ENCODE measurements at regions of chr6 and their contacts with region 1.

Region 1: GRCh38 chr6:25962149-25963127 is at the start of gene TRIM38:
- DNase-seq: peak; percentile 22 to 90 (median 85)
- ATAC-seq: peak; percentile 95
- H3K4me3 ChIP-seq: peak within 1 kb of the TSS; percentile 73
- H3K4me3 Mint-ChIP-seq: peak within 1 kb of the TSS; percentile 92 to 100 (median 97)
- H3K27ac ChIP-seq: peak within 1 kb of the TSS; percentile 97
- H3K27ac Mint-ChIP-seq: peak within 1 kb of the TSS; percentile 97 to 100 (median 98)
- H3K4me1 ChIP-seq: peaks cover 61 to 75% of the 10 kb centered on the region in 2 donors
- H3K4me1 Mint-ChIP-seq: peaks cover 61 to 89% (median 84%) of the 10 kb centered on the region in 7 donors
- H3K27me3 ChIP-seq: no peaks in the 10 kb centered on the region
- H3K27me3 Mint-ChIP-seq: no peaks in the 10 kb centered on the region
- total RNA-seq, gene TRIM38: 17.4 to 32.8 (median 29.9) TPM

Region 2: DNA sequence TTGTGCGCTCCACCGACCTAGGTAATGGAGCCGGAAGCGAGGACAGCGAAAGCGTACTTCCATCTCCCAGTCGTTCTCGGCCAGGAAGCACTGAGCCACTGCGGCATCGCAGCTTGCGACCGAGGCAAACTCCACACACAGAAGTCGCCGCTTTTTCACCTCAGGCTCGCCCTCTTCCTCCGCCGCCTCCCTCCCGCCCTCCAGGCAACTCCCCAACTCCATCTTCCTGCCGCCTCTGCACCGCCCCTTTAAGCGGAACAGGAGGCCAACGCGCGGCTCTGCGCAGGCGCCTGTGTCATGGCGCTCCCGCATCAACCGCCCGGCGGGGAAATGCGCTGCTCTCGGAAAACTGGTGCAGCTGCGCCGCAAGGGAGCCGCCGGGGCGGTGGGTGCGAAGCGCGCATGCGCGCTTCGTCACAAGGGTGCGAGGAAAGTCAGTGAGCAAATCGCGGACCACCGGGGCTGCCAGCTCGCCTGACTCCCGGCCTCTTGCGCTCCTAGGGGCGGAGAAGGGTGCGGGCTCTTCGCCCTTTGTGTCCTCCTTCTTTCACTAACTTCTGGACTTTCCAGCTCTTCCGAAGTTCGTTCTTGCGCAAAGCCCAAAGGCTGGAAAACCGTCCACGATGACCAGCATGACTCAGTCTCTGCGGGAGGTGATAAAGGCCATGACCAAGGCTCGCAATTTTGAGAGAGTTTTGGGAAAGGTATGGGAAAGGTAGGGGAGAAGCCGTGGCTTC is 1295.6 kb before region 1 on chr6 and contains the starts of genes ACOT13 and TDP2:
- CTCF ChIA-PET with region 1: no interaction called
- POLR2A ChIA-PET with region 1: no interaction called
- intact Hi-C with region 1: loop called in 1 of 2 experiments (anchors 5 kb)
- DNase-seq: peak; percentile 93 to 97 (median 96)
- ATAC-seq: peak; percentile 97
- H3K4me3 ChIP-seq: peak within 1 kb of the TSS; percentile 91
- H3K4me3 Mint-ChIP-seq: peak within 1 kb of the TSS; percentile 93 to 100 (median 98)
- H3K27ac ChIP-seq: peak within 1 kb of the TSS; percentile 88
- H3K27ac Mint-ChIP-seq: peak within 1 kb of the TSS; percentile 91 to 99 (median 98)
- H3K4me1 ChIP-seq: peaks cover 19 to 27% of the 10 kb centered on the region in 2 donors
- H3K4me1 Mint-ChIP-seq: peaks cover 28 to 70% (median 68%) of the 10 kb centered on the region in 7 donors
- H3K27me3 ChIP-seq: no peaks in the 10 kb centered on the region
- H3K27me3 Mint-ChIP-seq: no peaks in the 10 kb centered on the region
- total RNA-seq, gene ACOT13: 4.0 to 20.0 (median 12.5) TPM
- total RNA-seq, gene TDP2: 38.6 to 69.7 (median 48.2) TPM

Region 3: GRCh38 chr6:25278914-25279747 is 683.3 kb before region 1 on chr6 and contains the start of gene CARMIL1:
- CTCF ChIA-PET with region 1: no interaction called
- POLR2A ChIA-PET with region 1: no interaction called
- intact Hi-C with region 1: loop called in 1 of 2 experiments (anchors 5 kb)
- DNase-seq: peak; percentile 46 to 76 (median 70)
- ATAC-seq: peak; percentile 84
- H3K4me3 ChIP-seq: peak within 1 kb of the TSS; percentile 64
- H3K4me3 Mint-ChIP-seq: peak within 1 kb of the TSS; percentile 88 to 98 (median 94)
- H3K27ac ChIP-seq: peak within 1 kb of the TSS; percentile 77
- H3K27ac Mint-ChIP-seq: peak within 1 kb of the TSS; percentile 74 to 94 (median 90)
- H3K4me1 ChIP-seq: peaks cover 14 to 15% of the 10 kb centered on the region in 2 donors
- H3K4me1 Mint-ChIP-seq: peaks cover 19 to 62% (median 41%) of the 10 kb centered on the region in 7 donors
- H3K27me3 ChIP-seq: no peaks in the 10 kb centered on the region
- H3K27me3 Mint-ChIP-seq: peaks cover 0 to 16% (median 6%) of the 10 kb centered on the region in 5 donors
- total RNA-seq, gene CARMIL1: 3.3 to 12.8 (median 10.4) TPM

Region 4: DNA sequence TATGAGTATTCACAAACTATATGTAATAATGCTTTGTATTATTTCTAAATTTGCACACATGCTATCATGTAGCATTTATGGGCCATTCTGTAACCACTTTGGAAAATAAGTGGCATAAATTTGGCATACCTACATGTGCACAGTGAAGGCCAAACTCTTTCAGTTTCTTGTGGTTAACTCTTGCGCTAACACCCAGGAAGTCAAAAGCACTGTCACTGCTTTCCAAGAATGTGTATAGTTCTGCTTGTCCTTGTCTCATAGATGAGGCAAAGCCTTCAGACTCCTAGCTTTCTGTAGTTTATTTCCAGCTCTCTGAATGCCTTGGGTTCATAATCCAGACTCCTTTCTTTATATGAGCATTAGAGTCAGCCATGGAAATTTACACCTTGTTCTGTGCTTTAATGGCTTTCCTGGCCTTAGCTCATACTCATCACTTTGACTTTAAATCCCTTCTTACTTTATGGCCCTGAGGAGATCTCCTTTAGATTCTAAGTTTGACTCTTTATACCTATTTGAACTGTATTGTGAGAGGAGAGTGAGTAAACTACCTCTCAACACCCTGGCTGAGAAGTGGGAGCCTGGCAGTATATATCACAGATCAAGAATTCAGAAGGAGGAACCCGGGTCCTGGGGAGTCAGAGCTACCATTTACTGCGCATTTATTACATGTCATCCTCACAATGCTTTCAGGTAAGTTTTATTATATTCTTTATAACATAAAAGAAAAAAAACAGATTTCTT is 87.4 kb before region 1 on chr6:
- CTCF ChIA-PET with region 1: no interaction called
- POLR2A ChIA-PET with region 1: no interaction called
- intact Hi-C with region 1: loop called in 1 of 2 experiments (anchors 5 kb)
- DNase-seq: no peak
- ATAC-seq: no peak
- H3K4me3 ChIP-seq: no peak overlapping the region
- H3K4me3 Mint-ChIP-seq: peak overlapping the region in 1 of 10 donors; percentile 69
- H3K27ac ChIP-seq: no peak overlapping the region
- H3K27ac Mint-ChIP-seq: peak overlapping the region in 1 of 9 donors; percentile 83
- H3K4me1 ChIP-seq: peaks cover 4 to 15% of the 10 kb centered on the region in 2 donors
- H3K4me1 Mint-ChIP-seq: peaks cover 13 to 46% (median 20%) of the 10 kb centered on the region in 7 donors
- H3K27me3 ChIP-seq: no peaks in the 10 kb centered on the region
- H3K27me3 Mint-ChIP-seq: peaks cover 0 to 10% (median 0%) of the 10 kb centered on the region in 5 donors

Region 5: DNA sequence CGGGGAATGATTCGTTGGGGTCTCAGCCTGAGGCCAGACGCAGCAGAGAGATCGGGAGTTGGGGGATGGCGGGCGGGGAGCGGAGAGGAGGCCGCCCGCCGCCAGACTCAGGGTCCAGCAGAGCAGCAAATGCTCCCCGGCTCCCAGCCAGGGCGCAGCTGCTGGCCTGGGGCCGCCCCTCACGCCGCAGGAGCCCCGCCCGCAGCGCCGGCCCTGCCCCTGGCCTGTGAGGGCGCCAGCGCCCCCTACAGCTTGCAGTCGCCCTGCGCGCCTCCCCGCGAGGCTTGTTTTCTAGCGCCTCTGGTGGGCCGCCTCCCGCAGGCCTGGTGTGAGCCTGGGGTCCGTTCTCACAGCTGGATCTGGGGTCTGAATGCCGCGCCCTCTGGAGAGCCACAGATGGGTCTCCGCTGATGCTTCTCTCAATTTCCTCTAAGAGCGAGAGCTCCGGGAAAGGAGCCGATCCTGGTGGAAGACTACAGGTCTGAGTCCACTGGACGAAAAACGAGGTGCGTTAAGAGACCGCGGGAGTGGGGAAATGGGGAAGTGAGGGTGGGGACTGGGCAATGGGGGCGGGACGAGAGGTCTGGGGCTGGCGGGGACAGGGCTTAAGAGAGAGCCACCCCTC is 30.1 kb after region 1 on chr6:
- CTCF ChIA-PET with region 1: interaction called, 20 read pairs
- POLR2A ChIA-PET with region 1: interaction called, 13 read pairs
- intact Hi-C with region 1: loop called (anchors 1 kb)
- DNase-seq: peak; percentile 83 to 98 (median 91)
- ATAC-seq: peak; percentile 99
- H3K4me3 ChIP-seq: peak overlapping the region; percentile 79
- H3K4me3 Mint-ChIP-seq: peak overlapping the region; percentile 91 to 98 (median 94)
- H3K27ac ChIP-seq: peak overlapping the region; percentile 73
- H3K27ac Mint-ChIP-seq: peak overlapping the region; percentile 86 to 98 (median 95)
- H3K4me1 ChIP-seq: no peaks in the 10 kb centered on the region
- H3K4me1 Mint-ChIP-seq: peaks cover 0 to 40% (median 24%) of the 10 kb centered on the region in 7 donors
- H3K27me3 ChIP-seq: no peaks in the 10 kb centered on the region
- H3K27me3 Mint-ChIP-seq: no peaks in the 10 kb centered on the region

Region 6: DNA sequence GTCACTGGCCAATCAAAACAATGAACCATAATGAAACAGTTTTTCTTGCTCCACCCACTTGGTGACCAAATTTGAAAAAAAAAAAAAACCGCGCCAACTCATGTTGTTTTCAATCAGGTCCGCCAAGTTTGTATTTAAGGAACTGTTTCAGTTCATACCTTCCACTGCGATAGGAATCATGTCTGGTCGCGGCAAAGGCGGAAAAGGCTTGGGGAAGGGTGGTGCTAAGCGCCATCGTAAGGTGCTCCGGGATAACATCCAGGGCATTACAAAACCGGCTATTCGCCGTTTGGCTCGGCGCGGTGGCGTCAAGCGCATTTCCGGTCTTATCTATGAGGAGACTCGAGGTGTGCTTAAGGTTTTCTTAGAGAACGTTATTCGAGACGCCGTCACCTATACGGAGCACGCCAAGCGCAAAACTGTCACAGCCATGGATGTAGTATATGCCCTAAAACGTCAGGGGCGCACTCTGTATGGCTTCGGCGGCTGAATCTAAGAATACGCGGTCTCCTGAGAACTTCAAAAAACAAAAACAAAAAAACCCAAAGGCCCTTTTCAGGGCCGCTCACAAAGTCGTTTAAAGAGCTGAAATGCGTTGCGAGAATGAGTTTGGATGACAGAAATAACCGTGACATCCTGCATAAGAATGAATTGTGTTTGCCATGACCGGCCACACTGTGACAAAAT is 141.5 kb after region 1 on chr6:
- CTCF ChIA-PET with region 1: no interaction called
- POLR2A ChIA-PET with region 1: interaction called, 5 read pairs
- intact Hi-C with region 1: loop called in 1 of 2 experiments (anchors 1 kb)
- DNase-seq: peak; percentile 83 to 96 (median 95)
- ATAC-seq: peak; percentile 94
- H3K4me3 ChIP-seq: peak overlapping the region; percentile 40
- H3K4me3 Mint-ChIP-seq: peak overlapping the region; percentile 81 to 97 (median 89)
- H3K27ac ChIP-seq: peak overlapping the region; percentile 75
- H3K27ac Mint-ChIP-seq: peak overlapping the region; percentile 96 to 100 (median 98)
- H3K4me1 ChIP-seq: peaks cover 4 to 12% of the 10 kb centered on the region in 2 donors
- H3K4me1 Mint-ChIP-seq: peaks cover 7 to 25% (median 22%) of the 10 kb centered on the region in 7 donors
- H3K27me3 ChIP-seq: no peaks in the 10 kb centered on the region
- H3K27me3 Mint-ChIP-seq: peaks cover 0 to 3% (median 0%) of the 10 kb centered on the region in 5 donors

Region 7: DNA sequence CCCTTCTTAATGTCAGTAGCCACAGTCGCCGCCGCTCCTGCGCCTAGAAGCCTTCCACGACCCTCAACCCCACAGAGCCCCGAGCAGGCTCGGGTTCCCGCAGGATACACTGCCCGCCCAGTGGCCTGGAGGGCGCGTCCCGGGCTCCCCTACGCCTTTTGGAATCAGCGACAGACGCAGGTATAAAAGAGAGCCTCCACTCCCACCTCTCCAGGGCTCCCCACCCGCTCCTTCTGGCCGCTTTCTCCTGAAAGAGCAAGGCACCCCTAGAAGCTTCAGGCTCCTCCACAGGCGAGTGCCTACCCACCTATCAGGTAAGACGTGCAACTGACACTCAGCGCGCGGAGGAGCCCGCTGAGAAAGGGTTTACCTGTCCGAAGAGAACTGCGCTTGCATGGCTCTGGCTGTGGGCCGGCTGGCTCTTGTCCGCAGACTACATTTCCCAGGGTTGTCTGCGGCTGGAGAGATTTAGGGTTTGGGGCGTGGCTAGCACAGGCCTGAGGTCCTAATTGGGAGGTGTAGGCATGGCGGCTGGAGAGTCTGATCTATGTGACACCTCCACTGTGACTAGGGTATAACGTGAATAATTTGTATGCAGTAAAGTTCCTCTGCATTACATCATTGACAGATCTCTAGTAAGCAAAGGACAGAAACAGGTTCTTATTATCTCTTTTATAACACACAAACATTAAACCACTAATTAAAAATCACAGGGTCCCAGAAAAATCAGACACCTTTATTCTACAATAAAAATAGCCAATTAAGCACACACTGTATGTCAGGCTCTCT is 1412.6 kb after region 1 on chr6:
- CTCF ChIA-PET with region 1: no interaction called
- POLR2A ChIA-PET with region 1: no interaction called
- intact Hi-C with region 1: loop called in 1 of 2 experiments (anchors 5 kb)
- DNase-seq: peak; percentile 31 to 68 (median 62)
- ATAC-seq: peak; percentile 98
- H3K4me3 ChIP-seq: peak overlapping the region; percentile 81
- H3K4me3 Mint-ChIP-seq: peak overlapping the region; percentile 68 to 94 (median 92)
- H3K27ac ChIP-seq: peak overlapping the region; percentile 68
- H3K27ac Mint-ChIP-seq: peak overlapping the region in 8 of 9 donors; percentile 81 to 93 (median 87)
- H3K4me1 ChIP-seq: peaks cover 13 to 17% of the 10 kb centered on the region in 2 donors
- H3K4me1 Mint-ChIP-seq: peaks cover 16 to 35% (median 28%) of the 10 kb centered on the region in 7 donors
- H3K27me3 ChIP-seq: no peaks in the 10 kb centered on the region
- H3K27me3 Mint-ChIP-seq: peaks cover 0 to 6% (median under 1%) of the 10 kb centered on the region in 5 donors

Measured in naive thymus-derived CD4-positive, alpha-beta T cell (primary cell).